B cell (primary cell): ENCODE measurements at regions of chr2 and their contacts with region 1.

Region 1: DNA sequence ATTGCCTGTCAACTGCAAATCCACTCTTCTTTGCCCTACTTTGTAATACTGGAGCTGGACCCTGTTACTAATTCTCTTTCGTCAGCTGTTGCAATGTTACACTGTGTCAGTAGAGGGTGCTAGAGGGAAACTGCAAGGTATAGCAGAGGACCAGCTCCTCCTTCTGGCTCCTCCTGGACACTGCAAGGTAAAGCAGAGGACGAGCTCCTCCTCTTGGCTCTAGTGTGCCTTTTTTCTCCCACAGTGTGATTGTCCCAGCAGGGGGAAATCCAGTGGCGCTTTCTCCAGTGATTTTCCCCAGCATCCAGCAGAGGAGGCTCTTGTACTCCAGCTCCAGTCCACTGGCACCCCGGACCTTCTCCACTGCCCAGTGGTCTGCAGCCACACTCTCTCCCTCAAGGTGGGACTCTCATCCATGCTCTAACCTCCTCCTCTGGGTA is 95.6 kb downstream of the CAPN13 start:
- DNase-seq: peak; percentile 90
- ATAC-seq: peak; percentile 96
- H3K4me3 ChIP-seq: no peak overlapping the region
- H3K4me3 Mint-ChIP-seq: no peak overlapping the region
- H3K27ac ChIP-seq: no peak overlapping the region
- H3K27ac Mint-ChIP-seq: no peak overlapping the region
- H3K4me1 ChIP-seq: peaks cover 0 to 9% of the 10 kb centered on the region in 2 donors
- H3K4me1 Mint-ChIP-seq: peaks cover 9% of the 10 kb centered on the region
- H3K27me3 ChIP-seq: no peaks in the 10 kb centered on the region
- H3K27me3 Mint-ChIP-seq: no peaks in the 10 kb centered on the region
- CTCF ChIP-seq: peak; percentile 100

Region 2: DNA sequence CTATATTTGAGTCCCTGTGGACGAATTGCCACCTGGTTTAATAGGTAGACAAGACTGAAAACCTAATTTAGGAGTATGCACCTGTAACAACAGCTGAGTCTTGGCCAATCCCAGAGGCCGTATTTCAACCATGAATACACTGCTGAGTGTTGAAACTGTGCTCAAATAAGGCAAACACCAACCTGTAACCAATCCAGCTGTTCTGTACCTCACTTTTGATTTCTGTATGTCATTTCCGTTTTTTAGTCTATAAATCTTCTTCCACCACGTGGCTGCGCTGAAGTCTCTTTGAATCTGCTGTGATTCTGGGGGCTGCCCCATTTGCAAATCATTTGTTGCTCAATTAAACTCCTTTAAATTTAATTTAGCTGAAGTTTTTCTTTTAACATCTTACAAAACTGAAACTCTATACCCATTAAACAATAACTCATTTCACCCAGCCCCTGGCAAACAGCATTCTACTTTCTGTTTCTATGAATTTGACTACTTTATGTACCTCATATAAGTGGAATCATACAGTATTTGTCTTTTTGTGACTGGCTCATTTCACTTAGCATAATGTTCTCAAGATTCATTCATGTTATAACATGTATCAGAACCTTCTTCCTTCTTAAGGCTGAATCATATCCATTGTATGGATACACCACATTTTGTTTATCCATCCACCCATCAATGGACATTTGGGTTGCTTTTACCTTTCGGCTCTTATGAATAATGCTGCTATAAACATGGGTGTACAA is 572.4 kb before region 1 on chr2:
- CTCF ChIA-PET with region 1: interaction called, 10 read pairs
- POLR2A ChIA-PET with region 1: no interaction called
- intact Hi-C with region 1: no loop called
- DNase-seq: peak; percentile 75
- ATAC-seq: peak; percentile 56
- H3K4me3 ChIP-seq: peak overlapping the region in 1 of 5 experiments; percentile 6
- H3K4me3 Mint-ChIP-seq: peak overlapping the region; percentile 4
- H3K27ac ChIP-seq: peak overlapping the region in 1 of 2 donors; percentile 45
- H3K27ac Mint-ChIP-seq: peak overlapping the region; percentile 12
- H3K4me1 ChIP-seq: peaks cover 7 to 9% of the 10 kb centered on the region in 2 donors
- H3K4me1 Mint-ChIP-seq: peaks cover 11% of the 10 kb centered on the region
- H3K27me3 ChIP-seq: peaks cover 0 to 8% (median 2%) of the 10 kb centered on the region in 4 experiments
- H3K27me3 Mint-ChIP-seq: peaks cover 18% of the 10 kb centered on the region
- CTCF ChIP-seq: no peak

Region 3: GRCh38 chr2:30201990-30202389 is 509.7 kb before region 1 on chr2:
- CTCF ChIA-PET with region 1: interaction called, 344 read pairs
- POLR2A ChIA-PET with region 1: no interaction called
- intact Hi-C with region 1: no loop called
- DNase-seq: no peak
- ATAC-seq: no peak
- H3K4me3 ChIP-seq: no peak overlapping the region
- H3K4me3 Mint-ChIP-seq: no peak overlapping the region
- H3K27ac ChIP-seq: no peak overlapping the region
- H3K27ac Mint-ChIP-seq: no peak overlapping the region
- H3K4me1 ChIP-seq: no peaks in the 10 kb centered on the region
- H3K4me1 Mint-ChIP-seq: no peaks in the 10 kb centered on the region
- H3K27me3 ChIP-seq: no peaks in the 10 kb centered on the region
- H3K27me3 Mint-ChIP-seq: no peaks in the 10 kb centered on the region
- CTCF ChIP-seq: no peak

Region 4: DNA sequence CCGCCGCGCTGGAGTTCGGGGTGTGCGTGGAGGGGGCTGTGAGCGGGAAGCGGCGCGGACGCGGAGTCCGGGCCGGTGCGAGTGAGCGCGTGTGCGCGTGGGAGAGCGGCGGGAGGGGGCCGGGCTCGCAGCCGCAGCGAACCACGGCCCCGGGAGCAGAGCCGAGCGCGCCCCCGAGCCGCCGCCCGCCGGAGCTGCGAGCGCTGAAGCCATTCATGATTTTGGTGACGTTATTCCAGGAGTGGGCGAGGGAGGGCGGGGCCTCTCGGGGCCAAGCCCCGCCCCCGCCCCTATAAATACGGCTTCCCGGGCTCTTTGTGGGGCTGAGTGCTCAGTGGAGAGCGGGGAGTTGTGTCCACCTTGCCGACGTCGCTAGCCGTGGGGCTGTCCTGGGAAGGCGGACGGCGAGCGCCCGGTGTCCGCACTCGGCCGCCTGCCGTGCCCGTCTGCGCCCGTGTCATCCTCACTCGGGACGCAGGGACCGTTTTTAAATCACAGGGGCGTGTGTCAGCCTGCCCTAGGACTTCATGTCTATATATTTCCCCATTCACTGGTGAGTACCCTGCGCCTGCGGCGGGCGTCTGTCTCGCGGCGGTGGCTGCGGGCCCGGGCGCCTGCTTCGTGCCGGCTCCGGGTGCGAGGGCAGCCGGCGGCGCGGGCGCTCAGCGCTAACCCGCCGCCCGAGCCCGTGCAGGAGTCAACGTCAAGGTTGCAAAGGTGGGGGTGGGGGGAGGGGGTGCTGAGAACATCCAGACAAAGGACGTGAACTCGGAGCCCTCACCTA is 480.3 kb before region 1 on chr2 and contains the start of gene LBH:
- CTCF ChIA-PET with region 1: interaction called, 148 read pairs
- POLR2A ChIA-PET with region 1: interaction called, 7 read pairs
- intact Hi-C with region 1: no loop called
- DNase-seq: peak; percentile 97
- ATAC-seq: peak; percentile 56
- H3K4me3 ChIP-seq: peak within 1 kb of the TSS; percentile 84 to 94 (median 93)
- H3K4me3 Mint-ChIP-seq: peak within 1 kb of the TSS; percentile 80
- H3K27ac ChIP-seq: peak within 1 kb of the TSS; percentile 93 to 94
- H3K27ac Mint-ChIP-seq: peak within 1 kb of the TSS; percentile 98
- H3K4me1 ChIP-seq: peaks cover 38 to 48% of the 10 kb centered on the region in 2 donors
- H3K4me1 Mint-ChIP-seq: peaks cover 47% of the 10 kb centered on the region
- H3K27me3 ChIP-seq: no peaks in the 10 kb centered on the region
- H3K27me3 Mint-ChIP-seq: no peaks in the 10 kb centered on the region
- CTCF ChIP-seq: no peak
- total RNA-seq, gene LBH: 197 and 201 TPM in 2 replicates

Region 5: DNA sequence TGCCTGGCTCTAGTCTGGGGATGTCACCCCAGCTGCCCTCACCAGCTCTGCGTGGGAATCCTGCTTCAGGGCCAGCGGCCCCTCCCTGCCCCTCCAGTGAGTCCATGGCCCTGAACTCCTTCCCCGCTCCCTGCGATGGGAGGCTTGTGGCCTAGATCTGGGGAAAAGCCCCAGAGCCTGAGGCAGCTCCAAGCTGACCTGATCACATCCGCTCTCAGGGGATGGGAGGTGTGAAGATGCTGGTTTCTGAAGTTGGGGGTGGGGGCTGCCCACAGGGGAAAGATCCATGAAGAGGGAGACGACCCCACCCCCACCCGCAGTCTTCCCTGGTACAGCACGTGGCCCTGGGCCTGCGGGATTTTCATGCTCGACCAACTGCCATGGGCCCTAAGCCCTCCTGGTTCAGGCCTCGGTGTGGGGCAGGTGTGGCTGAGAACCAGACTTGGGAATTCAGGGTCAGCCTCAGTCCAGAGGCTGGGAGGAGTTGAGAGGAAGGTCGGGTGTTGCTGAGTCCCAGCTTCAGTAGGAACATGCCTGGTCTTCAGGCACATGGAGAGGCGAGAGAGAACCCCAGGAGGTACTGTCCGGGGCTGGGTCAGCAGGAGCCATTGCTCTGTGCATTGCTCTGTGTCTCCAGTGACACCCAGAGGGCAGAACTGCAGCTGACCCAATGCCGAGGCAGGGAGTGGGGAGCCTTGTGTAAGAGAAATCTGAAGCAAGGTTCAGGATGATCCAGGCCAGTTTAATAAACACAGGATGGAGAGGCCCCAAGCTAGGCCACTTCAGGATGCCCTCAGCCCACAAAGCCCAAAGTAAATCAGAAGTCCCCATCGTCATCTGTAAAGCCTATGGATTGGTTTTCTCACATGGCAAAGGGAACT is 19.5 kb before region 1 on chr2:
- CTCF ChIA-PET with region 1: interaction called, 27 read pairs
- POLR2A ChIA-PET with region 1: no interaction called
- intact Hi-C with region 1: no loop called
- DNase-seq: no peak
- ATAC-seq: no peak
- H3K4me3 ChIP-seq: no peak overlapping the region
- H3K4me3 Mint-ChIP-seq: no peak overlapping the region
- H3K27ac ChIP-seq: no peak overlapping the region
- H3K27ac Mint-ChIP-seq: no peak overlapping the region
- H3K4me1 ChIP-seq: no peaks in the 10 kb centered on the region
- H3K4me1 Mint-ChIP-seq: no peaks in the 10 kb centered on the region
- H3K27me3 ChIP-seq: no peaks in the 10 kb centered on the region
- H3K27me3 Mint-ChIP-seq: peaks cover 10% of the 10 kb centered on the region
- CTCF ChIP-seq: no peak

Region 6: GRCh38 chr2:31318361-31319336 is 607.0 kb after region 1 on chr2:
- CTCF ChIA-PET with region 1: interaction called, 18 read pairs
- POLR2A ChIA-PET with region 1: no interaction called
- intact Hi-C with region 1: loop called (anchors 5 kb)
- DNase-seq: peak; percentile 47
- ATAC-seq: peak; percentile 92
- H3K4me3 ChIP-seq: peak overlapping the region in 1 of 5 experiments; percentile 31
- H3K4me3 Mint-ChIP-seq: peak overlapping the region; percentile 67
- H3K27ac ChIP-seq: peak overlapping the region; percentile 11 to 65
- H3K27ac Mint-ChIP-seq: peak overlapping the region; percentile 89
- H3K4me1 ChIP-seq: peaks cover 31% of the 10 kb centered on the region in 2 donors
- H3K4me1 Mint-ChIP-seq: peaks cover 51% of the 10 kb centered on the region
- H3K27me3 ChIP-seq: no peaks in the 10 kb centered on the region
- H3K27me3 Mint-ChIP-seq: no peaks in the 10 kb centered on the region
- CTCF ChIP-seq: no peak